CD8-positive, alpha-beta T cell (primary cell): ENCODE measurements at regions of chr10 and their contacts with region 1.

Region 1: GRCh38 chr10:91163269-91163868 is 57.1 kb upstream of the PCGF5 start:
- DNase-seq: peak; percentile 68 to 94 (median 86)
- ATAC-seq: peak; percentile 74
- H3K4me3 ChIP-seq: peak overlapping the region; percentile 74 to 80
- H3K4me3 Mint-ChIP-seq: peak overlapping the region; percentile 93
- H3K27ac ChIP-seq: peak overlapping the region; percentile 91 to 93
- H3K27ac Mint-ChIP-seq: peak overlapping the region; percentile 99
- H3K4me1 ChIP-seq: peaks cover 22% of the 10 kb centered on the region
- H3K4me1 Mint-ChIP-seq: peaks cover 62% of the 10 kb centered on the region
- H3K27me3 ChIP-seq: no peaks in the 10 kb centered on the region
- H3K27me3 Mint-ChIP-seq: no peaks in the 10 kb centered on the region
- CTCF ChIP-seq: no peak

Region 2: GRCh38 chr10:91006001-91006751 is 157.2 kb before region 1 on chr10:
- CTCF ChIA-PET with region 1: interaction called, 16 read pairs
- POLR2A ChIA-PET with region 1: interaction called, 4 read pairs
- intact Hi-C with region 1: loop called in 1 of 2 experiments (anchors 1 kb)
- DNase-seq: peak; percentile 37 to 81 (median 68)
- ATAC-seq: peak; percentile 91
- H3K4me3 ChIP-seq: no peak overlapping the region
- H3K4me3 Mint-ChIP-seq: peak overlapping the region; percentile 73
- H3K27ac ChIP-seq: peak overlapping the region in 1 of 2 experiments; percentile 11
- H3K27ac Mint-ChIP-seq: peak overlapping the region; percentile 73
- H3K4me1 ChIP-seq: peaks cover 20% of the 10 kb centered on the region
- H3K4me1 Mint-ChIP-seq: peaks cover 21% of the 10 kb centered on the region
- H3K27me3 ChIP-seq: no peaks in the 10 kb centered on the region
- H3K27me3 Mint-ChIP-seq: no peaks in the 10 kb centered on the region
- CTCF ChIP-seq: peak; percentile 94

Region 3: GRCh38 chr10:91198781-91199180 is 35.4 kb after region 1 on chr10:
- CTCF ChIA-PET with region 1: interaction called, 6 read pairs
- POLR2A ChIA-PET with region 1: interaction called, 36 read pairs
- intact Hi-C with region 1: loop called (anchors 1 to 2 kb)
- DNase-seq: peak in 2 of 9 experiments; percentile 52 to 72
- ATAC-seq: peak; percentile 47
- H3K4me3 ChIP-seq: no peak overlapping the region
- H3K4me3 Mint-ChIP-seq: peak overlapping the region; percentile 13
- H3K27ac ChIP-seq: peak overlapping the region in 1 of 2 experiments; percentile 88
- H3K27ac Mint-ChIP-seq: peak overlapping the region; percentile 71
- H3K4me1 ChIP-seq: peaks cover 65% of the 10 kb centered on the region
- H3K4me1 Mint-ChIP-seq: peaks cover 84% of the 10 kb centered on the region
- H3K27me3 ChIP-seq: no peaks in the 10 kb centered on the region
- H3K27me3 Mint-ChIP-seq: no peaks in the 10 kb centered on the region
- CTCF ChIP-seq: no peak

Region 4: GRCh38 chr10:91251430-91252056 is 88.2 kb after region 1 on chr10:
- CTCF ChIA-PET with region 1: interaction called, 32 read pairs
- POLR2A ChIA-PET with region 1: interaction called, 13 read pairs
- intact Hi-C with region 1: no loop called
- DNase-seq: peak; percentile 18 to 79 (median 51)
- ATAC-seq: peak; percentile 89
- H3K4me3 ChIP-seq: no peak overlapping the region
- H3K4me3 Mint-ChIP-seq: no peak overlapping the region
- H3K27ac ChIP-seq: no peak overlapping the region
- H3K27ac Mint-ChIP-seq: no peak overlapping the region
- H3K4me1 ChIP-seq: peaks cover 15% of the 10 kb centered on the region
- H3K4me1 Mint-ChIP-seq: peaks cover 9% of the 10 kb centered on the region
- H3K27me3 ChIP-seq: no peaks in the 10 kb centered on the region
- H3K27me3 Mint-ChIP-seq: no peaks in the 10 kb centered on the region
- CTCF ChIP-seq: peak; percentile 99

Region 5: DNA sequence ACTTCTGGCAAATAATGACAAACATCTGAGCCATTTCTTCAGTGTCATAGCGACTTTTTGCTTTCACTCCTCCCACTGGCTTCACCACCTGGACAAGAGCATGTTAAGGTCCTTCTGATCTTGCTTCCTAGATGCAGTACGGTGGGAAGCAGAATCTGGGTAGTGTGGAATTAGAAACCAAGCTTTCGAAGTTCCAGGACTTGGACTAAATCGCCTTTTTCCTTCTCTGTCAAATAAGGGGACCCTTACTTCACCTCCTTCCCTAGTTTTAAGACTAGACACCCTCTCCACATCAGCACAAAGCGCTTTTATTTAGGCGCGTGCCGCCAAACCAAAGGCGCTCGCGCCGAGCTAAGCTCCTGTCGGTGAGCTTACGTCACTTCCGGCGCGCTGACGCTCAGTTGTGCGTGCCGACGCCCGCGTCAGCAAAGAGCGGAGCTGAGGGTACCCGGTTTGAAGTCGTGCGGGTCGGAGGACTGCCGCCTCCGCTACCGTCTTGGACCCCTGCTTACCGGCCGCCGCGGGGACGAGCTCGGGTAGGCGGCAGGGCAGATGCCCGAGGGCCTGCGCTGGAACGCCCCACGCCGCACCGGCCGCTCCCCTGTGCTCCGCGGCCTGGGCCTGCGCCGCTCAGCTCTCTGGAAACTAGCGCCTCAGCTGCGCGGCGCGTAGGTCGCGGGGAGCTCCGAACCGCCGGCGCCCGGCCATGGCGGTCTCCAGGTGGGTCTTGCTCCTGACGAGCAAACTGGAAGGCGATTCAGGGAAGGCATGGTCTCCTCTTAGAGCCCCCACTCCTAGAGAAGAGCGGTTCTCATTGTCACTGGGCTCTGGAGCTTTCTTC is 760.2 kb after region 1 on chr10 and contains the start of gene BTAF1:
- CTCF ChIA-PET with region 1: no interaction called
- POLR2A ChIA-PET with region 1: no interaction called
- intact Hi-C with region 1: loop called in 1 of 2 experiments (anchors 5 kb)
- DNase-seq: peak; percentile 82 to 97 (median 93)
- ATAC-seq: peak; percentile 94
- H3K4me3 ChIP-seq: peak within 1 kb of the TSS; percentile 87 to 97
- H3K4me3 Mint-ChIP-seq: peak within 1 kb of the TSS; percentile 99
- H3K27ac ChIP-seq: peak within 1 kb of the TSS; percentile 92 to 97
- H3K27ac Mint-ChIP-seq: peak within 1 kb of the TSS; percentile 98
- H3K4me1 ChIP-seq: peaks cover 36% of the 10 kb centered on the region
- H3K4me1 Mint-ChIP-seq: peaks cover 50% of the 10 kb centered on the region
- H3K27me3 ChIP-seq: peaks cover 0 to 2% of the 10 kb centered on the region in 2 experiments
- H3K27me3 Mint-ChIP-seq: peaks cover 2% of the 10 kb centered on the region
- CTCF ChIP-seq: no peak
- total RNA-seq, gene BTAF1: 88.6 to 90.7 TPM